Left cardiac atrium (tissue), 4 donors: ENCODE measurements at regions of chr18 and their contacts with region 1.

Region 1: GRCh38 chr18:67104700-67105284 is 411.7 kb downstream of the DSEL start:
- DNase-seq: peak; percentile 61
- ATAC-seq: peak; percentile 68 to 73

Region 2: DNA sequence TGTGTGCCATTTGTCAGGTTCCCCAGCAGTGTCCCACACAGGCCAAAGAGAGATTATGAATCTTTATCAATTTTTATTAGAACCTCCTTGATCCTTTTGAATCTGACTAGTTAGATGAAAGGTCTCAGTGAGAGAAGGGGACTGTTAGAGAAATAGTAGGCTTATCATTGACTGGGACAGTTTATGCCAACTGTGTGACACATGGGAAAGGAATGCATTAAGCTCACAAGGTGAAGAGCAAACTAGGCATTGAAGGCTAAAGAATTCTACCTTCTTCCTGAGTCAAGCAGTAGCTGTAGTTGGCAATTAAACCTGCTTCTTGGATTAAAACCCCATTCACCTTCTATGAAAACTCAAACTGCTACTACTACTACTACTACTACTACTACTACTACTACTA is 111.3 kb before region 1 on chr18:
- intact Hi-C with region 1: no loop called
- DNase-seq: no peak
- ATAC-seq: no peak

Region 3: DNA sequence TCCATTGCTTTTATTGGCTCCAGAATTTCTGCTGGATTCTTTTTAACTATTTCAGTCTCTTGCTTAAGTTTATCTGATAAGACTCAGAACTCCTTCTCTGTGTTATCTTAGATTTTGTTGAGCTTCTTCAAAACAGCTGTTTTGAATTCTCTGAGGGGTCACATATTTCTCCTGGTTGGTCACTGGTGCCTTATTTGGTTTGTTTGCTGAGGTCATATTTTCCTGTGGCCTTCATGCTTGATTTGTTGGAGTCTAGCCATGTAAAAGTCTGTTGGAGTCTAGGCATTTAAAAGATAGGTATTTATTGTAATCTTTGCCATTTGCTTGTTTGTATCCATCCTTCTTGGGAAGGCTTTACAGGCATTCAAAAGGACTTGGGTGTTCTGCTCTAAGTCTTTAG is 13.0 kb after region 1 on chr18:
- intact Hi-C with region 1: loop called in 1 of 2 experiments (anchors 1 kb)
- DNase-seq: no peak
- ATAC-seq: no peak

Region 4: GRCh38 chr18:67199993-67200617 is 95.3 kb after region 1 on chr18:
- intact Hi-C with region 1: loop called (anchors 5 kb)
- DNase-seq: no peak
- ATAC-seq: peak; percentile 55 to 61